ENCODE measurements at regions of chr10 and their contacts with region 1.

Region 1: GRCh38 chr10:61179766-61180165 is 235.8 kb upstream of the RHOBTB1 start:
- DNase-seq: no peak
- H3K4me3 Mint-ChIP-seq: no peak overlapping the region
- H3K27ac Mint-ChIP-seq: no peak overlapping the region
- H3K4me1 Mint-ChIP-seq: no peaks in the 10 kb centered on the region
- H3K27me3 Mint-ChIP-seq: no peaks in the 10 kb centered on the region

Region 2: GRCh38 chr10:60521974-60522405 is 657.8 kb before region 1 on chr10:
- intact Hi-C with region 1: loop called (anchors 5 kb)
- DNase-seq: no peak
- H3K4me3 Mint-ChIP-seq: no peak overlapping the region
- H3K27ac Mint-ChIP-seq: peak overlapping the region; percentile 66
- H3K4me1 Mint-ChIP-seq: peaks cover 30% of the 10 kb centered on the region
- H3K27me3 Mint-ChIP-seq: no peaks in the 10 kb centered on the region

Measured in activated T-helper 1 cell treated with anti-CD3 and anti-CD28 coated beads, Interleukin-12 subunit alpha, Interleukin-12 subunit beta, Interleukin-2, Interleukin-4 antibody, amounts not matched to agents 30 ng/mL and 10 ng/mL and 1 ng/mL, durations not matched to agents 14 hours and 24 hours and 36 hours (primary cell).